PC-3 (cell line): ENCODE measurements at regions of chr1 and their contacts with region 1.

Region 1: DNA sequence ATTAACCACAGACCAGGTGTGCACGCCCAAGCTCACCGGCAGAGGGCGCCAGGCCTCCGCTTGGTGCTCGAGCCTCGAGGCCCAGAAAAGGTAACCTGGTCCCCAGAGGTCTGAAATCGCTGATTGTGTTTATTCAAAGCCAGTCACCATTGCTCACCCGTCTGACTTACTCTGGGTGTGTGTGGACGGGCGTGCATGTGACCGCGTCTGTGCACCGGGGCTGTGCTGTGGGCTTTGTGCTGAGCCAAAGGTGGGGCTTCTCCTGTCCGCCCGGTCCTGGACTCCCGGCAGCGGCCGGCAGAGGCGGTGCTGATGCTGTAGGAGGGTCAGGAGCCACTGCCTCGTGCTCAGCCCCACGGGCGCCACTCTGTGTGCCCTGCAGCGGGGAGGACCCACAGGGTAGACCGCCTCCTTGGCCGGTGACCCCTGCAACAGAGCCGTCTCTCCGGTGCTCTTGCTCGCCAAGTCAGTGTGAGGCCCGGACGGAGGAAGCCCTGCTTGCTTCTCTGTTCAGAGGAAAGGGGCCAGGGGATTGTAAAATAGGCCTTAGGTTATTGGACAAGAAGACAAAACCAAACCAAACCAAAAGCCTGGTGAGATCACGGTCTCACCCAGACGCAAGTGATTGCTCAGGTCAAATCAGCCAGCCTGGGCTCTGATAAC is 32.0 kb upstream of the BTG2 start:
- DNase-seq: peak; percentile 98
- ATAC-seq: peak; percentile 90
- H3K4me3 ChIP-seq: peak overlapping the region; percentile 33; the same call in 1 of the 2 replicates
- H3K27ac ChIP-seq: no peak overlapping the region
- H3K4me1 ChIP-seq: peaks cover 19% of the 10 kb centered on the region
- H3K27me3 ChIP-seq: no peaks in the 10 kb centered on the region
- CTCF ChIP-seq: peak; percentile 99

Region 2: GRCh38 chr1:203316626-203317093 is 43.3 kb after region 1 on chr1:
- CTCF ChIA-PET with region 1: interaction called, 10 read pairs
- POLR2A ChIA-PET with region 1: no interaction called
- intact Hi-C with region 1: no loop called
- DNase-seq: no peak
- ATAC-seq: no peak
- H3K4me3 ChIP-seq: no peak overlapping the region
- H3K27ac ChIP-seq: no peak overlapping the region
- H3K4me1 ChIP-seq: no peaks in the 10 kb centered on the region
- H3K27me3 ChIP-seq: peaks cover 17% of the 10 kb centered on the region
- CTCF ChIP-seq: no peak

Region 3: GRCh38 chr1:203326830-203327683 is 53.7 kb after region 1 on chr1:
- CTCF ChIA-PET with region 1: interaction called, 23 read pairs
- POLR2A ChIA-PET with region 1: no interaction called
- intact Hi-C with region 1: loop called (anchors 1 kb)
- DNase-seq: peak; percentile 94
- ATAC-seq: peak; percentile 94
- H3K4me3 ChIP-seq: peak overlapping the region; percentile 68
- H3K27ac ChIP-seq: peak overlapping the region; percentile 43
- H3K4me1 ChIP-seq: peaks cover 21% of the 10 kb centered on the region; the same call in 1 of the 2 replicates
- H3K27me3 ChIP-seq: peaks cover 19% of the 10 kb centered on the region; the same call in 1 of the 2 replicates
- CTCF ChIP-seq: no peak

Region 4: DNA sequence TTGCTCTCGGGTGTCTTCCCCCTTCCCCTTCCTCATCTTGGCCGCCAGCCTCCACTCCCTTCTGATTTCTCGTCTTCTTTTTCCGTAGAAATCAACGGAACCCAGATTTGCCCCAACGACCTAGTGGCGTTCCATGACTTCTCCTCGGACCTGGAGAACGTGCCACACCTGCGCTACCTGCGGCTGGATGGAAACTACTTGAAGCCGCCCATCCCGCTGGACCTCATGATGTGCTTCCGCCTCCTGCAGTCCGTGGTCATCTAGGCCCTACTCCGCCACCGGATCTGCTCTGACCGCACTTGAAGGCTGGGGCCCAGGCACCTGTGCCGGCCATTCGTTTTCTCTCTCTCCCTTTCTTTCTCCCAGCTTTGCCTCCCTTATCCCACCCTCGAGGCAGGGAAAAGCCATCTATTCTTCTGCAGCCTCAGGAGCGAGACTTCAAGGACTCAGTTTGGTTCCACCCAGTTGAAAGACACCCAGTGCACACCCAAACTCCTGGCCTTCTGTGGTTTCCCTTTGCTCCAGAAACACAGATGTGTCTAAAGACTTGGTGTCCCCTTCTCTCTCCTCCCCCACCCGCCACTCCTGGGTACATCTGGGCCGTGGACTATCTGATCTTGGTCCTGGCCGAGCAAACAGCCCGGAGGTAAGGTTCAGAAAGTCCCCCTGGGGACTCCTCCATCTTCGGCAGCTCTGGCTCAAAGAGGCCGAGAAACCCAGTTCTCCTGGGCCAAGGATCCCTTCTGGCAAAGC is 213.5 kb after region 1 on chr1:
- CTCF ChIA-PET with region 1: interaction called, 7 read pairs
- POLR2A ChIA-PET with region 1: no interaction called
- intact Hi-C with region 1: loop called (anchors 1 kb)
- DNase-seq: no peak
- ATAC-seq: no peak
- H3K4me3 ChIP-seq: no peak overlapping the region
- H3K27ac ChIP-seq: no peak overlapping the region
- H3K4me1 ChIP-seq: no peaks in the 10 kb centered on the region
- H3K27me3 ChIP-seq: no peaks in the 10 kb centered on the region
- CTCF ChIP-seq: no peak